PC-9 (cell line): ENCODE measurements at regions of chr12 and their contacts with region 1.

Region 1: GRCh38 chr12:68665016-68665569 is 21.7 kb upstream of the NUP107 start:
- DNase-seq: no peak
- H3K4me3 ChIP-seq: no peak overlapping the region
- H3K27ac ChIP-seq: no peak overlapping the region
- H3K4me1 ChIP-seq: no peaks in the 10 kb centered on the region
- H3K27me3 ChIP-seq: no peaks in the 10 kb centered on the region
- CTCF ChIP-seq: 0 out of 2 replicates have a peak, but pooled peaks have one; percentile 18

Region 2: GRCh38 chr12:68358532-68359485 is 306.3 kb before region 1 on chr12:
- CTCF ChIA-PET with region 1: no interaction called
- POLR2A ChIA-PET with region 1: no interaction called
- intact Hi-C with region 1: loop called (anchors 5 kb)
- DNase-seq: peak; percentile 48 to 61
- H3K4me3 ChIP-seq: no peak overlapping the region
- H3K27ac ChIP-seq: no peak overlapping the region
- H3K4me1 ChIP-seq: peaks cover under 1% of the 10 kb centered on the region
- H3K27me3 ChIP-seq: no peaks in the 10 kb centered on the region
- CTCF ChIP-seq: peak; percentile 78

Region 3: GRCh38 chr12:69112616-69113015 is 447.5 kb after region 1 on chr12:
- CTCF ChIA-PET with region 1: no interaction called
- POLR2A ChIA-PET with region 1: no interaction called
- intact Hi-C with region 1: no loop called
- DNase-seq: no peak
- H3K4me3 ChIP-seq: no peak overlapping the region
- H3K27ac ChIP-seq: no peak overlapping the region
- H3K4me1 ChIP-seq: no peaks in the 10 kb centered on the region
- H3K27me3 ChIP-seq: no peaks in the 10 kb centered on the region
- CTCF ChIP-seq: no peak